ENCODE measurements at regions of chr3 and their contacts with region 1.

Region 1: DNA sequence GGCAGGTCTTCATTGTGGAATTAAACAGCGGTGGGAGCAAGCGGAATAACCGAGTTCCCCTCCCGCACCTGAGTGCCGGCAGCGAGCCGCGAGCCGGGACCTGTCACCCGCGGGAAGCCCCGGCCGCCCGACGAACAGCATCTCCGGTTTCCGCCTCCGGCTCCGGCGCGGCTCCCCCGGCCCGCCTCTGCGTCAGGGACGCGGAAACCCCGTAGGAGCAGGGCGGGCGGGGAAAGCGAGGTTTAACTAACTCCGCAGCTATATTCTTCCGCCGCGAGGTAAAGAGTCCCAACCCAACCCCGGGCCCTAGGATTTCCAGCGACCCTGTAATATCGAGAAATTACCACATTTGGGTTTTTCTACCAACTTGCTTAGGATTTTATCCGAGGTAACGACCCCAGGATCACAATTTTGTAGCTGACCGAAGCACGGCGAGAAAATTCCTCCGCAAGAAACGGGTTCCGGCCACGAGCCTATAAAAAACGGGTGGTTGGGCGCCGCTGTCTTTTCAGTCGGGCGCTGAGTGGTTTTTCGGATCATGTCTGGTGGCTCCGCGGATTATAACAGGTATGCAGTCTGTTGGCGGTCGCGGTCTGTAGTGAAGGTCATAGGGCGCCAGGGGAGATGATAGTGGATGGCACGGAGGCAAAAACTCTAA is at the start of gene EIF4A2:
- DNase-seq: peak; percentile 51 to 93
- H3K4me3 ChIP-seq: peak within 1 kb of the TSS; percentile 98 to 100 (median 99)
- H3K27ac ChIP-seq: peak within 1 kb of the TSS; percentile 98
- H3K4me1 ChIP-seq: peaks cover 0 to 3% (median 1%) of the 10 kb centered on the region in 4 experiments; a peak in 2 of 7 replicates
- H3K27me3 ChIP-seq: no peaks in the 10 kb centered on the region
- CTCF ChIP-seq: no peak
- EP300 ChIP-seq: peak; percentile 22 to 57; a peak in 2 of 3 replicates
- POLR2A ChIP-seq: peak; percentile 98 to 100
- RAD21 ChIP-seq: 0 out of 4 replicates have a peak, but pooled peaks of 1 of the 2 experiments have one; percentile 5
- total RNA-seq, gene EIF4A2: 596 and 604 TPM in 2 replicates

Region 2: GRCh38 chr3:185937689-185938463 is 845.3 kb before region 1 on chr3 and contains the start of gene TRA2B:
- CTCF ChIA-PET with region 1: no interaction called
- POLR2A ChIA-PET with region 1: interaction called, 11 read pairs
- DNase-seq: peak; percentile 96 to 98
- H3K4me3 ChIP-seq: peak within 1 kb of the TSS; percentile 83 to 100 (median 96)
- H3K27ac ChIP-seq: peak within 1 kb of the TSS; percentile 100
- H3K4me1 ChIP-seq: peaks cover 0 to 4% (median 0%) of the 10 kb centered on the region in 4 experiments; a peak in 1 of 7 replicates
- H3K27me3 ChIP-seq: no peaks in the 10 kb centered on the region
- CTCF ChIP-seq: peak; percentile 5 to 41 (median 35); a peak in 2 of 4 replicates
- EP300 ChIP-seq: peak in 1 of 2 experiments; percentile 64; a peak in 1 of 3 replicates
- POLR2A ChIP-seq: peak; percentile 98 to 99
- RAD21 ChIP-seq: no peak
- total RNA-seq, gene TRA2B: 267 and 274 TPM in 2 replicates

Region 3: GRCh38 chr3:186617038-186617946 is 165.9 kb before region 1 on chr3:
- CTCF ChIA-PET with region 1: interaction called, 6 read pairs
- POLR2A ChIA-PET with region 1: interaction called, 87 read pairs
- DNase-seq: peak; percentile 75 to 87
- H3K4me3 ChIP-seq: peak overlapping the region in 1 of 4 experiments; percentile 17; a peak in 1 of 8 replicates
- H3K27ac ChIP-seq: no peak overlapping the region
- H3K4me1 ChIP-seq: peaks cover 0 to 7% (median 6%) of the 10 kb centered on the region in 4 experiments; a peak in 6 of 7 replicates
- H3K27me3 ChIP-seq: peaks cover 0 to 2% (median 0%) of the 10 kb centered on the region in 4 experiments; a peak in 1 of 7 replicates
- CTCF ChIP-seq: peak; percentile 85 to 98 (median 96)
- EP300 ChIP-seq: no peak
- POLR2A ChIP-seq: no peak
- RAD21 ChIP-seq: peak; percentile 74 to 84

Region 4: DNA sequence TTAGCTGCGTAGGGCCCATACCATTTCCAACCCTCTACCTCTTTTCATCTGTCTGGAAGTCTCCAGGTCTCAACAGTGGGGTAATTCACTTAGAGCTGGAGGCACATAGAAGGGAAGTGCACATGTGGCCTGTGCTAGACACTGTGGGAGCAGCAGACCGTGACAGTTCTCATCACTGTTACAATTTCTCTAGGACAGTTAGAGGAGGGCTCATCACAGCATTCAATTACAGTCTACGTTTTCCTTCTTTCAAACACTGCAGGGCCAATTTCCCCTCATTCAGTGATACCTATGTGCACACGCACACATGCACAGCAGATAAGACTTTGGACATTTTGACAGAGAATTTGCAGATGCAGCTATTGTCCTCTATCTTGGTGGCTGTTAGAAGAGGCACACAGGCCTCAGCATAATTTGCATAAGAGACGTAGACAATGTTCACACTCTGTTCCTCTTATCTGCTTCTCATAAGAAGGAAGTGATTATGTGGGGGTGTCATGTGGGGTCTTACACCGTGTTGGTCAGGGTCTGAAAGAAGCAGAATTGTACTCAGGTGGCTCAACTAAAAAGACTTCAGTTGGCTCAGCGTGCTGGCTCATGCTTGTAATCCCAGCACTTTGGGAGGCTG is 130.0 kb before region 1 on chr3:
- CTCF ChIA-PET with region 1: no interaction called
- POLR2A ChIA-PET with region 1: interaction called, 19 read pairs
- DNase-seq: no peak
- H3K4me3 ChIP-seq: no peak overlapping the region
- H3K27ac ChIP-seq: no peak overlapping the region
- H3K4me1 ChIP-seq: peaks cover 0 to 5% (median 3%) of the 10 kb centered on the region in 4 experiments; a peak in 3 of 7 replicates
- H3K27me3 ChIP-seq: no peaks in the 10 kb centered on the region
- CTCF ChIP-seq: no peak
- EP300 ChIP-seq: no peak
- POLR2A ChIP-seq: no peak
- RAD21 ChIP-seq: no peak

Region 5: GRCh38 chr3:186732169-186732766 is 50.9 kb before region 1 on chr3:
- CTCF ChIA-PET with region 1: no interaction called
- POLR2A ChIA-PET with region 1: interaction called, 11 read pairs
- DNase-seq: no peak
- H3K4me3 ChIP-seq: no peak overlapping the region
- H3K27ac ChIP-seq: no peak overlapping the region
- H3K4me1 ChIP-seq: no peaks in the 10 kb centered on the region
- H3K27me3 ChIP-seq: no peaks in the 10 kb centered on the region
- CTCF ChIP-seq: no peak
- EP300 ChIP-seq: no peak
- POLR2A ChIP-seq: no peak
- RAD21 ChIP-seq: no peak

Region 6: DNA sequence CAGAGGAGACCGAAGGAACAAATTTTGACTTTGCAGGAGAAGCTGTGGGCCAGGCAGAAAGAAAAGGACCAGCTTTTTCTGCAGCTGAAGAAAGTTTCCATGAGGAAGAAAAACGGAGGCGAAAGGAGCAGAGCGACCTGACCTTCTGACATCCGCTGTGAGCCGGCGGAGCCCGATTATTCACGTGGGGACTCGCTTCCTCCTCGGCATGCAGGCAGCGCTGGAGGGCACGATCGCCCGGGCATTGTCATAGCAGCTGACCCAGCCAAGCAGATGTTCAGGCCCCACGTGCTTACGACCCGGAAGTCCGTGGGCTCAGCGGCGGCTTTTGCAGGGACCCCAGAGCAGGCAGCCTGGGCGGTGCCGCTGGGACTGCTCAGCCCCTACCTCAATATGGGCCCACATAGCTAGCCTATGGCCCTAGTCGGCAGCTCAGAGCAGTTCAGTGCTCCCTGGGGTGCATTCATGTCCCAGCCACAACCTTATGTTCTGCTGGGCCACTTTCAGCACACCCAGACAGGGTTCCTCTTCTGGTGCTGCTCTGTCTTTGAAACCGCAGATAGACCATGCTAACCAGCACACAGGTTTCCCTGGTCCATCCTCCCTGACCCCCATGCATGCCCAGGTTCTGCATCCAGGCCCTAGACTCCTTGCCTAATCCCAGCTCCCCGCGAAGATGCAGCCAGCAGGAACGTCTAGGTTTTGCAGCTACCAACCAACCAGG is 10.3 kb before region 1 on chr3:
- CTCF ChIA-PET with region 1: interaction called, 6 read pairs
- POLR2A ChIA-PET with region 1: interaction called, 170 read pairs
- DNase-seq: no peak
- H3K4me3 ChIP-seq: no peak overlapping the region; a peak in 1 of 8 replicates
- H3K27ac ChIP-seq: no peak overlapping the region
- H3K4me1 ChIP-seq: peaks cover 0 to 19% (median 5%) of the 10 kb centered on the region in 4 experiments; a peak in 6 of 7 replicates
- H3K27me3 ChIP-seq: peaks cover 0 to 3% (median 0%) of the 10 kb centered on the region in 4 experiments; a peak in 2 of 7 replicates
- CTCF ChIP-seq: no peak
- EP300 ChIP-seq: no peak
- POLR2A ChIP-seq: no peak
- RAD21 ChIP-seq: no peak

Region 7: GRCh38 chr3:186826976-186827731 is 44.0 kb after region 1 on chr3:
- CTCF ChIA-PET with region 1: no interaction called
- POLR2A ChIA-PET with region 1: interaction called, 73 read pairs
- DNase-seq: peak in 1 of 2 experiments; percentile 88
- H3K4me3 ChIP-seq: peak overlapping the region; percentile 43 to 69 (median 46)
- H3K27ac ChIP-seq: no peak overlapping the region
- H3K4me1 ChIP-seq: peaks cover 7 to 23% (median 18%) of the 10 kb centered on the region in 4 experiments
- H3K27me3 ChIP-seq: peaks cover 0 to 38% (median 29%) of the 10 kb centered on the region in 4 experiments; a peak in 6 of 7 replicates
- CTCF ChIP-seq: no peak
- EP300 ChIP-seq: no peak
- POLR2A ChIP-seq: peak in 1 of 2 experiments; percentile 27; a peak in 1 of 3 replicates
- RAD21 ChIP-seq: no peak

Region 8: DNA sequence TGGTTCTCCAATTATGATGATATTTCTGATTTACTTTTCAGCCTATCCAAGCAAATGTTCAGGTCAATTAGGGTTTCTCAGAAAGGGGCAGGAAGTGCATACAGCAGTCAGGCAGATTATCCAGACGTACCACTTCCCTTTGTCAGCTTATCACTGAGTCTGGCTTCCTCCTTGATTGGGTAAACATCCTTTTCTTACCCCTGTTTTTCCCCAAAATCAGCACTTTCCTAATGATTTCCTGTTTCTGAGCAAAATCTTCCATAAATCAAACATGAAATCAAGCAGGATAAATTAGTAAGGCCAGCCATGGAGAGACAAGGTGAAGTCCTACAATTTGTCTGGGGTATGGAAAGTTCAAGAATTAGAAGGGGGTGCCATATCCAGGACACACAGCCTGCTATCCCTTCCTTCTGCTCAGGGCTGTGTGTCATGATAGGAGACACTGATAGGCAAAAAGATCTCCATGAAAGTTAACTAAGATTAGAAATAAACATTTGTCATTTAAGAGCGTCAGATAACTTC is 88.3 kb after region 1 on chr3:
- CTCF ChIA-PET with region 1: no interaction called
- POLR2A ChIA-PET with region 1: no interaction called
- DNase-seq: no peak
- H3K4me3 ChIP-seq: no peak overlapping the region
- H3K27ac ChIP-seq: no peak overlapping the region
- H3K4me1 ChIP-seq: no peaks in the 10 kb centered on the region
- H3K27me3 ChIP-seq: peaks cover 0 to 1% (median 0%) of the 10 kb centered on the region in 4 experiments; a peak in 1 of 7 replicates
- CTCF ChIP-seq: no peak
- EP300 ChIP-seq: no peak
- POLR2A ChIP-seq: no peak
- RAD21 ChIP-seq: no peak